ENCODE measurements at regions of chr3 and their contacts with region 1.

Region 1: DNA sequence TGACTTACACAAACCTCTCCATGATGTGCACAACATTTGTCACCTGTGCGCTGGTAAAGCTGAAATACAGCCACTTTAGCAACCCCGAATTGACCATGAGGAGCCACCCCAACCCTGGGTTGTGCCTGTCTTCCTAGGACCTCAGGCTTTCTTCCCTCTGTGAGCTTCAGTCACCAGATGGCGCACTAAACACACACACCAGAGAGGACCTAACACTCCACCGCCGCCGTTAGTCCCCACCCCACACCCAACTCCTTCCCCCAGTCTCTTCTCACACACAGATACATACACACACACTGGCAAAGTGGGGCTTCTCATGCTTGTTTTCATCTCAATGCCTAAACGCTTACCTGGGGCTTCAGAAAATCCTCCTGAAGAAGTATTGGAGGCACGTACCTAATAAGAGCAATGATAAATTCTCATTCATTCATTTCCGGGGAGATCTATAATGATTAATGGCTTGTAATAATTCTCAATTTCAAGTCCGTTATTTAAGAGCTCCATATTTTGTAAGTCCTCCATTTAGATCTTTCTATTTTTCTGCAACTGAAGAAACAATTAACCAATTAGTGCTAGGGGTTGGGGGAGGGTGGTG is 2.1 kb upstream of the CCDC80 start:
- DNase-seq: peak; percentile 88 to 95
- H3K4me3 ChIP-seq: no peak overlapping the region
- CTCF ChIP-seq: peak in 1 of 3 donors; percentile 56
- POLR2A ChIP-seq: no peak

Region 2: DNA sequence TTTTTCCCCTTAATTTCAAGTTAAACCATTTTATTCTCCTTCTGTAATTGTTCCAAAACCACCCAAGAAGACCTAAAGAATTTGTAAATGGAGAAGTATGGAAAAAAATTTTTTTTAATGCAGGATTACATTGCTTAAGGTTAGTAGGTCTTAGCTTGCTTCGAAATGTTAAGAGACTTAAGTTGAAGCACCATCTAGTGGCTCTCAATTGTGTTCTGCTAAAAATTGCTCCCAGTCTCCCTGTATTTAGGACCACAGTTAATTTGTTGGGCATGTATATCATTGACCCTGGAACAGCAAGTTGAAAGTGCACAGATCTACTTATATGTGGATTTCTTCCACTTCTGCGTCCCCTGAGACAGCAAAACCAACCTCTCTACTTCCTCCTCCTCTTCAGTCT is 171.3 kb after region 1 on chr3:
- intact Hi-C with region 1: loop called (anchors 10 kb)
- DNase-seq: no peak
- H3K4me3 ChIP-seq: no peak overlapping the region
- CTCF ChIP-seq: no peak
- POLR2A ChIP-seq: no peak

Region 3: DNA sequence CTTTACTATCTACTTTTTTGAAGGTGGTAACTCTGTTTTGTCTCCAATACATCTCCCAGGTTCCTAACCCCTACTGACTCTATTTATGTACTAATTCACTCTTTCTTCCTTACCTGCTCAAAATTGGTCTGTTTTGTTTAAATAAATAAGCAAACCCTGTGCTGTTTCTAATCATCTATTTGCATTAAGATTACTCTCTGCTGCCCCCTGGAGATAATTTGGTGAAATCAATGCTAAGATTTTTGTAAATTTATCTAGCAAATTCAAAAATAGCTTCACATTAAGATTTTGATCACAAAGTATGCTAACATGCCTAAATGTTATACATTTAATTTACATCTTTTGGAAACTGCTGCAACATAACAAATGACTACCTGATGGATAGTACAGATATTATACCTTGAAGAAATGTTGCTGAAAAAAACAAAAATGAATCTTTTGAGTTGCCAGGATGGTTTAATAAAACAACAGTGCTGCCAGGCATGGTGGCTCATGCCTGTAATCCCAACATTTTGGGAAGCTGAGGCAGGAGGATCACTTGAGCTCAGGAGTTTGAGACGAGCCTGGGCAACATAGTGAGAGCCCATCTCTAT is 336.3 kb after region 1 on chr3:
- intact Hi-C with region 1: loop called (anchors 5 kb)
- DNase-seq: no peak
- H3K4me3 ChIP-seq: no peak overlapping the region
- CTCF ChIP-seq: no peak
- POLR2A ChIP-seq: no peak

Region 4: GRCh38 chr3:113084777-113085176 is 441.8 kb after region 1 on chr3:
- intact Hi-C with region 1: no loop called
- DNase-seq: peak in 1 of 2 donors; percentile 27
- H3K4me3 ChIP-seq: no peak overlapping the region
- CTCF ChIP-seq: no peak
- POLR2A ChIP-seq: no peak